ENCODE measurements at regions of chr6 and their contacts with region 1.

Region 1: GRCh38 chr6:139334806-139335446 is 39.5 kb downstream of the CITED2 start:
- DNase-seq: peak in 1 of 2 donors; percentile 38
- ATAC-seq: peak in 7 of 8 donors; percentile 62 to 79 (median 72)
- H3K4me3 ChIP-seq: no peak overlapping the region
- H3K27ac ChIP-seq: peak overlapping the region in 8 of 10 donors; percentile 30 to 88 (median 64)
- H3K4me1 ChIP-seq: peaks cover 0 to 65% (median 8%) of the 10 kb centered on the region in 9 donors
- H3K27me3 ChIP-seq: no peaks in the 10 kb centered on the region
- CTCF ChIP-seq: no peak

Region 2: GRCh38 chr6:139230391-139230840 is 104.5 kb before region 1 on chr6:
- intact Hi-C with region 1: loop called in 1 of 10 experiments (anchors 10 kb)
- DNase-seq: no peak
- ATAC-seq: peak in 6 of 8 donors; percentile 44 to 70 (median 60)
- H3K4me3 ChIP-seq: no peak overlapping the region
- H3K27ac ChIP-seq: peak overlapping the region in 1 of 10 donors; percentile 8
- H3K4me1 ChIP-seq: peaks cover 0 to 12% (median 3%) of the 10 kb centered on the region in 9 donors
- H3K27me3 ChIP-seq: no peaks in the 10 kb centered on the region
- CTCF ChIP-seq: peak in 3 of 9 donors; percentile 12 to 28 (median 20)